AG04449 (cell line): ENCODE measurements at regions of chr7 and their contacts with region 1.

Region 1: GRCh38 chr7:12458520-12459131 is 55.0 kb upstream of the VWDE start:
- DNase-seq: no peak
- H3K4me3 ChIP-seq: no peak overlapping the region
- CTCF ChIP-seq: peak; percentile 59

Region 2: GRCh38 chr7:12436896-12437535 is 21.6 kb before region 1 on chr7:
- CTCF ChIA-PET with region 1: interaction called, 22 read pairs
- POLR2A ChIA-PET with region 1: no interaction called
- DNase-seq: no peak
- H3K4me3 ChIP-seq: no peak overlapping the region
- CTCF ChIP-seq: no peak

Region 3: GRCh38 chr7:12444785-12445184 is 13.8 kb before region 1 on chr7:
- CTCF ChIA-PET with region 1: interaction called, 13 read pairs
- POLR2A ChIA-PET with region 1: no interaction called
- DNase-seq: no peak
- H3K4me3 ChIP-seq: no peak overlapping the region
- CTCF ChIP-seq: no peak

Region 4: DNA sequence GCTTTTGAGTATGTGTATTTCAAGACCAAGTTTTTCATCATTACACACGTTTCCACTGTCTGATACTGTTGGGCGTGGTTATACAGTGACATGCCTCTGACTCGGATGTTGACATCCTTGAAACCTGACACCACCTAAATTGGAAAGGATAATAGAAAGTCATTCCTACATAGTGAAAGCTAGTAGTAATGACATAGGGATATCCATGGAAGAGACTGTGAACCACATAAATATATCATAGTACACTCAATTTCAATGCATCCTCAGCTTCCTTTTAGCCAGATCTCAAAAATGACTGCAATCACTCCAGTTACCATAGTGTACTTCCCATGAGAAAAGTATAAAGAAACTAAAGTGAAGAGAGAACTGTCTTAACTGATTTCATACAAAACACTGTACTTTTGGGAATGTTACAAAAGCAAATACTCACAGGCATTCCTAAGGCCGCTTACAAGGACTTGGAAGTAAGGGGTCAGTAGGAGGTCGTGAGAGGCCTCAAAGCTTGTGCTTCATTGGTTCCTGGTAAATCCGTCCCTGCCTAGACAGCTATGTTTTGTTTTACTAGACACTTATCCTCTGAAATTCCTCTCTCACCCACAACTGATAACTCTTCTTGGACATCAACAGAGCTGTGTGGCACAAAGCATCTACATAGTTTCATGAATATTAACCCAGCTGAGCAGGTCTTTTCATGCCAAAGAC is 16.9 kb after region 1 on chr7:
- CTCF ChIA-PET with region 1: interaction called, 51 read pairs
- POLR2A ChIA-PET with region 1: no interaction called
- DNase-seq: no peak
- H3K4me3 ChIP-seq: no peak overlapping the region
- CTCF ChIP-seq: no peak

Region 5: GRCh38 chr7:12490117-12490688 is 31.6 kb after region 1 on chr7:
- CTCF ChIA-PET with region 1: interaction called, 71 read pairs
- POLR2A ChIA-PET with region 1: no interaction called
- DNase-seq: no peak
- H3K4me3 ChIP-seq: no peak overlapping the region
- CTCF ChIP-seq: peak; percentile 22